Posterior cingulate gyrus (tissue), 11 donors: ENCODE measurements at regions of chr4 and their contacts with region 1.

Region 1: DNA sequence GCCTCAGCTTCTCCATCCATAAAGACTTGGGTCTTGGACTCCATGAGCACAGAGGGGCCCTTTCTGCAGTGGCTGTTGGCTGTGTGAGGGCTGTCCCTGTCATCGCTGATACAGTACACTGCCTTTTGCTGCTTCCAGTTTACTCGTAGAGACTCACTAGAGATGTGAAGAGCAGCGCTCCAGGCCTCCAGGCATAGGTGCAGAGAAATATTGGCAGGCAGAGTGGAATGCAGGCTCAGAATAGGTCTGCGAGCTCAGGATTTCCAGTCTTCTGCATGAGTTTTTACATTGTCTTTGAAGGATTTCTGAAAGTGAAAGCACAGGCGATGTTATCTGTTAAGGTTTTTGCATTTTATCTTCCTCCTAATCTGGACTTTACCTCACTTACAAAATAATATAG is 97.4 kb downstream of the AASDH start:
- DNase-seq: no peak

Region 2: GRCh38 chr4:56026596-56026995 is 263.3 kb before region 1 on chr4:
- intact Hi-C with region 1: no loop called
- DNase-seq: no peak

Region 3: DNA sequence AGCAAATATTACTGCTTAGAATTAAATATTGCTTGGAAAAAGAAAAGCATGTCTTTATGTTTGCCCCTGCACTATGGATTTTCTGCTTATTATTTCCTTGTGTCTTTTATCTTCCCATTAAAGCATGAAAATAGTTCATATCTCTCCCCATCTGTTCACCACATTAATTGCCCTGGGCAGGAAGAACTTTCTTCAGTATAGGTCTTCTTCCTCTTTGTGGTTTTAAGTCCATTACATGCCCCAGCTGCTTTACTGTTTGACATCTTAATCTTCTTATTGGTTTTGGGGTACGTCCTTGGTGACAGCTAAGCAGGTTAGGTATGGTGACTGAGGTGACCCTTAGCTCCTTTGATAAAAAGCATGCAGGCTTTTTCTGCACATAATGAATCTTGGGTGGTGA is 60.0 kb before region 1 on chr4:
- intact Hi-C with region 1: loop called (anchors 10 kb)
- DNase-seq: no peak